HEK293T (cell line): ENCODE measurements at regions of chr1 and their contacts with region 1.

Region 1: GRCh38 chr1:203702130-203702577 is 62.8 kb upstream of the LAX1 start:
- DNase-seq: peak; percentile 76

Region 2: GRCh38 chr1:203504397-203505250 is 197.5 kb before region 1 on chr1:
- CTCF ChIA-PET with region 1: interaction called, 12 read pairs
- POLR2A ChIA-PET with region 1: no interaction called
- DNase-seq: peak; percentile 89

Region 3: GRCh38 chr1:203625628-203626019 is 76.5 kb before region 1 on chr1:
- CTCF ChIA-PET with region 1: interaction called, 19 read pairs
- POLR2A ChIA-PET with region 1: interaction called, 7 read pairs
- DNase-seq: peak; percentile 31